Astrocyte of the cerebellum (primary cell): ENCODE measurements at regions of chr7 and their contacts with region 1.

Region 1: GRCh38 chr7:41085244-41085643 is 617.6 kb downstream of the INHBA start:
- DNase-seq: peak; percentile 79
- H3K4me3 ChIP-seq: no peak overlapping the region
- CTCF ChIP-seq: no peak

Region 2: GRCh38 chr7:40996233-40996677 is 89.0 kb before region 1 on chr7:
- in situ Hi-C with region 1: loop called (anchors 5 kb)
- DNase-seq: no peak
- H3K4me3 ChIP-seq: no peak overlapping the region
- CTCF ChIP-seq: no peak

Region 3: GRCh38 chr7:41134300-41135250 is 49.3 kb after region 1 on chr7:
- in situ Hi-C with region 1: no loop called
- DNase-seq: no peak
- H3K4me3 ChIP-seq: no peak overlapping the region
- CTCF ChIP-seq: no peak

Region 4: GRCh38 chr7:41351091-41351490 is 265.8 kb after region 1 on chr7:
- in situ Hi-C with region 1: no loop called
- DNase-seq: no peak
- H3K4me3 ChIP-seq: no peak overlapping the region
- CTCF ChIP-seq: no peak